Caco-2 (cell line): ENCODE measurements at regions of chr13 and their contacts with region 1.

Region 1: GRCh38 chr13:87671031-87671752 is at the start of gene SLITRK5:
- DNase-seq: peak; percentile 54 to 66
- H3K4me3 ChIP-seq: peak within 1 kb of the TSS; percentile 14; the same call in 1 of the 2 replicates
- H3K4me3 Mint-ChIP-seq: peak within 1 kb of the TSS; percentile 65
- H3K27ac Mint-ChIP-seq: no peak within 1 kb of the TSS
- H3K4me1 ChIP-seq: no peaks in the 10 kb centered on the region
- H3K4me1 Mint-ChIP-seq: no peaks in the 10 kb centered on the region
- H3K27me3 ChIP-seq: no peaks in the 10 kb centered on the region
- H3K27me3 Mint-ChIP-seq: no peaks in the 10 kb centered on the region
- CTCF ChIP-seq: peak; percentile 64 to 68
- total RNA-seq, gene SLITRK5: not detected in 2 replicates

Region 2: GRCh38 chr13:86870444-86870843 is 800.7 kb before region 1 on chr13:
- CTCF ChIA-PET with region 1: no interaction called
- POLR2A ChIA-PET with region 1: no interaction called
- intact Hi-C with region 1: loop called (anchors 1 kb)
- DNase-seq: no peak
- H3K4me3 ChIP-seq: no peak overlapping the region
- H3K4me3 Mint-ChIP-seq: no peak overlapping the region
- H3K27ac Mint-ChIP-seq: no peak overlapping the region
- H3K4me1 ChIP-seq: no peaks in the 10 kb centered on the region
- H3K4me1 Mint-ChIP-seq: no peaks in the 10 kb centered on the region
- H3K27me3 ChIP-seq: no peaks in the 10 kb centered on the region
- H3K27me3 Mint-ChIP-seq: peaks cover 2% of the 10 kb centered on the region
- CTCF ChIP-seq: peak; percentile 56 to 63

Region 3: GRCh38 chr13:87259551-87259954 is 411.6 kb before region 1 on chr13:
- CTCF ChIA-PET with region 1: no interaction called
- POLR2A ChIA-PET with region 1: no interaction called
- intact Hi-C with region 1: loop called (anchors 10 kb)
- DNase-seq: peak in 1 of 2 experiments; percentile 41
- H3K4me3 ChIP-seq: no peak overlapping the region
- H3K4me3 Mint-ChIP-seq: no peak overlapping the region
- H3K27ac Mint-ChIP-seq: no peak overlapping the region
- H3K4me1 ChIP-seq: no peaks in the 10 kb centered on the region
- H3K4me1 Mint-ChIP-seq: peaks cover 7% of the 10 kb centered on the region
- H3K27me3 ChIP-seq: no peaks in the 10 kb centered on the region
- H3K27me3 Mint-ChIP-seq: peaks cover 3% of the 10 kb centered on the region
- CTCF ChIP-seq: peak; percentile 41 to 55

Region 4: DNA sequence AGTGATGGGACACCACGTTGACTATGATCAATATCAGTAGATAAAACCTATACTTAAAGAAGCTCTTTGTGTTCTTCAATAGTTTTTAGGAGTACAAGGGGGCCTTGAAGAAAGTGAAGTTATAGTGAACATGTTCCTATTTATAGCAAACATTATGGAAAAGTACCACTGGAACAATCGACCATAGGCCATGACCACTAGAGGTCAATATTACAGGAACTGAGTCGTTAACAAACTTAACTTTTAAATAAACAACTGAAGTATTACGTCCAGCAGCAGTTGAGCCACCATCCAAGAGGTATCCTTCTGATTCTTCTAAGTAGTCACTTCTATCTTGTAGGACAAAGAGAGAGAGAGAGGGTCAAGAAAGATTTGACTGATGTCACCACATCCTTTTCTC is 391.1 kb before region 1 on chr13:
- CTCF ChIA-PET with region 1: no interaction called
- POLR2A ChIA-PET with region 1: no interaction called
- intact Hi-C with region 1: loop called (anchors 5 kb)
- DNase-seq: no peak
- H3K4me3 ChIP-seq: no peak overlapping the region
- H3K4me3 Mint-ChIP-seq: no peak overlapping the region
- H3K27ac Mint-ChIP-seq: no peak overlapping the region
- H3K4me1 ChIP-seq: no peaks in the 10 kb centered on the region
- H3K4me1 Mint-ChIP-seq: no peaks in the 10 kb centered on the region
- H3K27me3 ChIP-seq: no peaks in the 10 kb centered on the region
- H3K27me3 Mint-ChIP-seq: peaks cover 4% of the 10 kb centered on the region
- CTCF ChIP-seq: peak; percentile 14 to 36

Region 5: DNA sequence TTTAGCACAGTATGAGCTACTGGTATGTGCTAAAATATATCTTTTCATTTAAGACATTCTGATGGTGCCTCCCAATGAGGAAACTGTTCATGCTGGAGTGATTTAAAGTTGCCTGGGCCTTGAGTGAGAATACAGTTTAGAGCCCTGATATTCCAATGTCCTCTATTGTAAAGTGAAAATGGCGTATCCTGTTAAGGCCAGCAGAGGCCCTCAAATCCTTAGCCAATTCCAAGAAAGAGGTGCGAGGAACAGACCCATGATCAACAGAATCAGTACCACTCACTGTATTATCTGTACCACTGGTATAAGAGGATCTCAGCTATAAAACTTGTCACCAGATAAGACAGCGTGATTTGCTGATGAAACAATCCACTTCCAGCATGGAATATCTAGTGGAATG is 273.1 kb before region 1 on chr13:
- CTCF ChIA-PET with region 1: interaction called, 3 read pairs
- POLR2A ChIA-PET with region 1: no interaction called
- intact Hi-C with region 1: loop called (anchors 5 kb)
- DNase-seq: no peak
- H3K4me3 ChIP-seq: no peak overlapping the region
- H3K4me3 Mint-ChIP-seq: no peak overlapping the region
- H3K27ac Mint-ChIP-seq: no peak overlapping the region
- H3K4me1 ChIP-seq: no peaks in the 10 kb centered on the region
- H3K4me1 Mint-ChIP-seq: no peaks in the 10 kb centered on the region
- H3K27me3 ChIP-seq: no peaks in the 10 kb centered on the region
- H3K27me3 Mint-ChIP-seq: no peaks in the 10 kb centered on the region
- CTCF ChIP-seq: no peak

Region 6: DNA sequence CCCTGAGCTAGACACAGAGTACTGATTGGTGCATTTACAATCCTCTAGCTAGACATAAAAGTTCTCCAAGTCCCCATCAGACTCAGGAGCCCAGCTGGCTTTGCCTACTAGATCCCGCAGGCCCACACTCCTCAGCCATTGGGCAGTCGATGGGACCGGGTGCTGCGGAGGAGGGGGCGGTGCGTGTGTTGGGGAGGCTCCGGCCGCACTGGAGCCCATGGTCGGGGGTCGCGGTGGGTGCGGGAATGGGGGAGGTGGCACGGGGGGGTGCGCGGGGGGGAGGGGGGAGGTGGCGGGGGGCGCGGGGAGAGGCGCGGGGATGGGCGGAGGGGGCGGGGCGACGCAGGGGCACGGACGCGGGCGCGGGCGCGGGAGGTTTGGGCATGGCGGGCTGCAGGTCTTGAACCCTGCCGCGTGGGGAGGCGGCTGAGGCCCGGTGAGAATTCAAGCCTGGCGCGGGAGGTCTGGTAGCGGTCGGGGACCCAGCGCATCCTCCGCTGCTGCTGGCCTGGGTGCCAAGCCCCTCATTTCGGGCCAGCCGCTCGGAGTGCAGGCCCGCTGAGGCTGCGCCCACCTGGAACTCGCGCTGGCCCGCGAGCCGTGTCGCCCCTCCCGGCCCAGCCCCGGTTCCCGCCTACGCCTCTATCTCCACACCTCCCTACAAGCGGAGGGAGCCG is 674.1 kb after region 1 on chr13:
- CTCF ChIA-PET with region 1: no interaction called
- POLR2A ChIA-PET with region 1: no interaction called
- intact Hi-C with region 1: no loop called
- DNase-seq: no peak
- H3K4me3 ChIP-seq: no peak overlapping the region
- H3K4me3 Mint-ChIP-seq: no peak overlapping the region
- H3K27ac Mint-ChIP-seq: no peak overlapping the region
- H3K4me1 ChIP-seq: no peaks in the 10 kb centered on the region
- H3K4me1 Mint-ChIP-seq: no peaks in the 10 kb centered on the region
- H3K27me3 ChIP-seq: no peaks in the 10 kb centered on the region
- H3K27me3 Mint-ChIP-seq: peaks cover 10% of the 10 kb centered on the region
- CTCF ChIP-seq: no peak